Panc1 (cell line): ENCODE measurements at regions of chr18 and their contacts with region 1.

Region 1: DNA sequence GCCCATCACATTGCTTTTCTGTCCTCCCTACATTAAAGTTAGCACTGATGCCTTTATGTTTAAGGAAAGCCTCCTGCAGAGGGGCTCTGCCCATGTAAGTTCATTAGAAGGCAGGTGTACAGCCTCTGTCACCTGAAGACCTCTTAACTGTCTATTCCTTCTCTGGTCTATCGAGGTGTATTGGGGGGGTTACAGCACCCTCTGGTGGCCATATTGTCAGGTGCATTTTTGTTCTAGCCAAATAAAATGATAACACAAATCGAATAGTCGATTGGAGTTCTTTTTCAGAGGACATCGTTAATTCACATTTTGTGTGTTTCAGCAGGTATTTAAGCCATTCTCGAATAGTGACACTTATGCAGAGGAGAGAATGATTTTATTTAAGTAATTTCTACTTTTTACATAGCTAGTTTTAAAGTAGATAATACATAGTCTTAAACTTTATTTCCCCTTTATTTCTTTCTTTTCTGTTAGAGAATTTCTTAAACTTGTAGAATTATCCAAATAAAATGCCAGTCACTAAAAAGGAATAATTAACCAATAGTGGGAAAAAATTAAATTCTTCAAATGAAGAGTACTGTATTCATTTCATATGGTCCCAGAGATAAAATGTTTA is 136.8 kb downstream of the NEDD4L start:
- DNase-seq: no peak
- ATAC-seq: peak; percentile 64; the same call in 1 of the 2 replicates
- H3K4me3 ChIP-seq: no peak overlapping the region
- H3K27ac ChIP-seq: no peak overlapping the region
- H3K4me1 ChIP-seq: peaks cover 30% of the 10 kb centered on the region
- H3K27me3 ChIP-seq: no peaks in the 10 kb centered on the region
- CTCF ChIP-seq: peak; percentile 78

Region 2: DNA sequence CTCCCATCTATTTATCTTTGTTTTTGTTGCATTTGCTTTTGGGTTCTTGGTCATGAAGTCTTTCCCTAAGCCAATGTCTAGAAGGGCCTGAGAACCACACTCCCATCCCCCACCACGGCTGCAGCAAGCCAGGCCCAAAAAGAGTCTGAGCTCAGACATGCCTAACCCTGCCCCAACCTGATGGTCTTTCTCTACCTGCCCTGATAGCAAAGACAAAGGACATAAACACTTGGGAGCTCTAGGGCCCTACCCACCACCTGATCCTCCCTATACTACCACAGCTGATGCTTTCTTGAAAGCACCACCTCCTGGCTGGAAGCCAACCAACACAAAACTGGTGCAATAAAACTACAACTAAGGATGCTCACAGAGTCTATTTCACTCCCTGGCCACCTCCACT is 1296.3 kb before region 1 on chr18:
- CTCF ChIA-PET with region 1: no interaction called
- POLR2A ChIA-PET with region 1: interaction called, 12 read pairs
- in situ Hi-C with region 1: no loop called
- intact Hi-C with region 1: no loop called
- DNase-seq: no peak
- ATAC-seq: no peak
- H3K4me3 ChIP-seq: no peak overlapping the region
- H3K27ac ChIP-seq: no peak overlapping the region
- H3K4me1 ChIP-seq: no peaks in the 10 kb centered on the region
- H3K27me3 ChIP-seq: no peaks in the 10 kb centered on the region
- CTCF ChIP-seq: no peak

Region 3: GRCh38 chr18:58043491-58044379 is 137.1 kb before region 1 on chr18 and contains the start of gene NEDD4L:
- CTCF ChIA-PET with region 1: interaction called, 6 read pairs
- POLR2A ChIA-PET with region 1: no interaction called
- in situ Hi-C with region 1: no loop called
- intact Hi-C with region 1: loop called (anchors 5 kb)
- DNase-seq: peak; percentile 62
- ATAC-seq: peak; percentile 93
- H3K4me3 ChIP-seq: peak within 1 kb of the TSS; percentile 78 to 83
- H3K27ac ChIP-seq: peak within 1 kb of the TSS; percentile 39; the same call in 1 of the 2 replicates
- H3K4me1 ChIP-seq: peaks cover 4% of the 10 kb centered on the region
- H3K27me3 ChIP-seq: no peaks in the 10 kb centered on the region
- CTCF ChIP-seq: peak; percentile 84
- total RNA-seq, gene NEDD4L: 42.9 TPM

Region 4: GRCh38 chr18:58051765-58052460 is 128.9 kb before region 1 on chr18:
- CTCF ChIA-PET with region 1: interaction called, 11 read pairs
- POLR2A ChIA-PET with region 1: no interaction called
- in situ Hi-C with region 1: no loop called
- intact Hi-C with region 1: no loop called
- DNase-seq: no peak
- ATAC-seq: no peak
- H3K4me3 ChIP-seq: no peak overlapping the region
- H3K27ac ChIP-seq: no peak overlapping the region; the same call in 1 of the 2 replicates
- H3K4me1 ChIP-seq: no peaks in the 10 kb centered on the region; the same call in 1 of the 2 replicates
- H3K27me3 ChIP-seq: no peaks in the 10 kb centered on the region
- CTCF ChIP-seq: peak; percentile 28; the same call in 1 of the 2 replicates

Region 5: GRCh38 chr18:58223717-58224424 is 43.0 kb after region 1 on chr18:
- CTCF ChIA-PET with region 1: interaction called, 16 read pairs
- POLR2A ChIA-PET with region 1: no interaction called
- in situ Hi-C with region 1: no loop called
- intact Hi-C with region 1: no loop called
- DNase-seq: peak; percentile 83
- ATAC-seq: peak; percentile 86
- H3K4me3 ChIP-seq: peak overlapping the region; percentile 28 to 69
- H3K27ac ChIP-seq: peak overlapping the region; percentile 83
- H3K4me1 ChIP-seq: peaks cover 52% of the 10 kb centered on the region
- H3K27me3 ChIP-seq: no peaks in the 10 kb centered on the region
- CTCF ChIP-seq: no peak

Region 6: GRCh38 chr18:58321986-58322385 is 141.1 kb after region 1 on chr18:
- CTCF ChIA-PET with region 1: no interaction called
- POLR2A ChIA-PET with region 1: no interaction called
- in situ Hi-C with region 1: no loop called
- intact Hi-C with region 1: loop called (anchors 10 kb)
- DNase-seq: peak; percentile 68
- ATAC-seq: peak; percentile 93
- H3K4me3 ChIP-seq: no peak overlapping the region
- H3K27ac ChIP-seq: no peak overlapping the region
- H3K4me1 ChIP-seq: peaks cover 3% of the 10 kb centered on the region; the same call in 1 of the 2 replicates
- H3K27me3 ChIP-seq: no peaks in the 10 kb centered on the region
- CTCF ChIP-seq: peak; percentile 56